Esophagus muscularis mucosa (tissue), 4 donors: ENCODE measurements at regions of chr3 and their contacts with region 1.

Region 1: GRCh38 chr3:9915254-9916141 is 1.4 kb upstream of the IL17RC start:
- DNase-seq: no peak
- H3K4me3 ChIP-seq: peak overlapping the region; percentile 65 to 78 (median 72)
- H3K27ac ChIP-seq: peak overlapping the region; percentile 88 to 96 (median 94)
- H3K4me1 ChIP-seq: peaks cover 33 to 59% (median 50%) of the 10 kb centered on the region in 4 donors
- H3K27me3 ChIP-seq: no peaks in the 10 kb centered on the region
- CTCF ChIP-seq: peak; percentile 51 to 67 (median 52)
- EP300 ChIP-seq: no peak
- POLR2A ChIP-seq: no peak

Region 2: GRCh38 chr3:9211155-9211950 is 704.1 kb before region 1 on chr3:
- intact Hi-C with region 1: no loop called
- DNase-seq: no peak
- H3K4me3 ChIP-seq: no peak overlapping the region
- H3K27ac ChIP-seq: no peak overlapping the region
- H3K4me1 ChIP-seq: no peaks in the 10 kb centered on the region
- H3K27me3 ChIP-seq: no peaks in the 10 kb centered on the region
- CTCF ChIP-seq: no peak
- EP300 ChIP-seq: no peak
- POLR2A ChIP-seq: no peak

Region 3: GRCh38 chr3:9769426-9770275 is 145.8 kb before region 1 on chr3 and contains the start of gene CAMK1:
- intact Hi-C with region 1: no loop called
- DNase-seq: no peak
- H3K4me3 ChIP-seq: peak within 1 kb of the TSS; percentile 77 to 90 (median 85)
- H3K27ac ChIP-seq: peak within 1 kb of the TSS; percentile 88 to 93 (median 90)
- H3K4me1 ChIP-seq: peaks cover 34 to 46% (median 43%) of the 10 kb centered on the region in 4 donors
- H3K27me3 ChIP-seq: no peaks in the 10 kb centered on the region
- CTCF ChIP-seq: no peak
- EP300 ChIP-seq: no peak
- POLR2A ChIP-seq: peak; percentile 73
- total RNA-seq, gene CAMK1: 53.6 to 78.9 (median 70.2) TPM

Region 4: GRCh38 chr3:9846231-9846630 is 69.3 kb before region 1 on chr3:
- intact Hi-C with region 1: loop called (anchors 5 kb)
- DNase-seq: no peak
- H3K4me3 ChIP-seq: no peak overlapping the region
- H3K27ac ChIP-seq: no peak overlapping the region
- H3K4me1 ChIP-seq: peaks cover 12 to 22% (median 18%) of the 10 kb centered on the region in 4 donors
- H3K27me3 ChIP-seq: no peaks in the 10 kb centered on the region
- CTCF ChIP-seq: no peak
- EP300 ChIP-seq: no peak
- POLR2A ChIP-seq: no peak

Region 5: GRCh38 chr3:9862391-9863057 is 53.0 kb before region 1 on chr3:
- intact Hi-C with region 1: loop called (anchors 2 kb)
- DNase-seq: no peak
- H3K4me3 ChIP-seq: peak overlapping the region; percentile 41 to 54 (median 46)
- H3K27ac ChIP-seq: peak overlapping the region; percentile 80 to 87 (median 86)
- H3K4me1 ChIP-seq: peaks cover 19 to 56% (median 51%) of the 10 kb centered on the region in 4 donors
- H3K27me3 ChIP-seq: no peaks in the 10 kb centered on the region
- CTCF ChIP-seq: peak; percentile 46 to 62 (median 53)
- EP300 ChIP-seq: no peak
- POLR2A ChIP-seq: no peak